ENCODE measurements at regions of chr4 and their contacts with region 1.

Region 1: DNA sequence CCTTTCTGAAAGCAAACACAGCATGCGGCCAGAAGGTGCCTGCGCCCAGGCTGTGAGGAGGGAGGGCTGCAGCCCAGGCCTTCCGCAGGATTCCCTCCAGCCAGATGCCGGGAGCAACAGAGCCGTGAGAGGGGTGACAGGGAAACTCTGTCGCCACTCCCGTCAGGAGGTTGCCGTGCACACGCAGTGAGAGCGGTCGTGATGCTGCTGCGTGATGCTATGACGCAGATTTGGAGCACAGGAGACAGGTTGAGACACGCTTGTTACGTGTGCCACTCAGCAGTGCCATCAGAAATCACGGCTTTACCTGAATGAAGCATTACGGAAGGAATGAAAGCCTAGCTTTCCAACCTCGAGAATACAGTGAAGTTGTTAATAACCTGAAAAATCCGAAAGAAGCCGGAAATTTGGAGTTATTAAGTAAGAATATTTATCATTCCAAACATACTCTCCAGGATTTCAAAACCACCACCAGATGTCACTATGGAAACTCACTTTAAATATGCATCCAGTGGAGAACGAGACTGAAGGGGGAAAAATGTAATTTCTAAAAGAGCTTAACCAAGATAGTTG is 54.4 kb downstream of the FAT1 start:
- DNase-seq: peak; percentile 50
- ATAC-seq: peak; percentile 63
- H3K4me3 ChIP-seq: no peak overlapping the region
- H3K27ac ChIP-seq: no peak overlapping the region
- H3K4me1 ChIP-seq: peaks cover 16% of the 10 kb centered on the region
- H3K27me3 ChIP-seq: no peaks in the 10 kb centered on the region
- CTCF ChIP-seq: peak; percentile 49
- EP300 ChIP-seq: no peak
- POLR2A ChIP-seq: no peak
- RAD21 ChIP-seq: no peak

Region 2: GRCh38 chr4:185933078-185933581 is 736.1 kb before region 1 on chr4:
- CTCF ChIA-PET with region 1: no interaction called
- POLR2A ChIA-PET with region 1: no interaction called
- in situ Hi-C with region 1: no loop called
- intact Hi-C with region 1: no loop called
- DNase-seq: no peak
- ATAC-seq: no peak
- H3K4me3 ChIP-seq: no peak overlapping the region
- H3K27ac ChIP-seq: no peak overlapping the region
- H3K4me1 ChIP-seq: no peaks in the 10 kb centered on the region
- H3K27me3 ChIP-seq: peaks cover 0 to 21% of the 10 kb centered on the region in 2 experiments; a peak in 1 of 5 replicates
- CTCF ChIP-seq: no peak
- EP300 ChIP-seq: no peak
- POLR2A ChIP-seq: no peak
- RAD21 ChIP-seq: no peak

Region 3: GRCh38 chr4:186719925-186720694 is 50.9 kb after region 1 on chr4:
- CTCF ChIA-PET with region 1: interaction called, 10 read pairs
- POLR2A ChIA-PET with region 1: no interaction called
- in situ Hi-C with region 1: no loop called
- intact Hi-C with region 1: loop called (anchors 1 kb)
- DNase-seq: no peak
- ATAC-seq: no peak
- H3K4me3 ChIP-seq: no peak overlapping the region
- H3K27ac ChIP-seq: no peak overlapping the region
- H3K4me1 ChIP-seq: peaks cover 51% of the 10 kb centered on the region
- H3K27me3 ChIP-seq: no peaks in the 10 kb centered on the region; a peak in 1 of 5 replicates
- CTCF ChIP-seq: peak; percentile 58
- EP300 ChIP-seq: no peak
- POLR2A ChIP-seq: no peak
- RAD21 ChIP-seq: no peak

Measured in HepG2 (cell line).